OCI-LY7 (cell line): ENCODE measurements at regions of chr3 and their contacts with region 1.

Region 1: DNA sequence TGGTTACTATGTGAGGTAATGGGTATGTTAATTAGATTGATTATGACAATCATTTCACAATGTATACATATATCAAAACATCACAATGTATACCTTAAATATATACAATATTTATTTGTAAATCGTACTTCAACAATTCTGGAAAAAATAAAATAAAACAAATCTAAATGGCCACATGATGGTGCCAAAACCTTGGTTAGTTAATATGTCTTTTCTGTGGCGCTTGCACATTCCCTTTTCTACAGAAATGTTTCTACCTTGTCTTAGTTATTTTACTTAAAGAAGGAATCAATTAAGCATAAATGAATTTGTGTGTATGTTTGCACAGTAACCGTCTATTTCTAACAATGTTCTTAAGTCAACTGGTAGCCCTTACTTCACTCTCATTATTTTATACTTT is 53.4 kb downstream of the OXSM start:
- DNase-seq: peak; percentile 25
- H3K4me3 ChIP-seq: no peak overlapping the region
- H3K27ac ChIP-seq: no peak overlapping the region
- H3K4me1 ChIP-seq: no peaks in the 10 kb centered on the region
- CTCF ChIP-seq: peak; percentile 73

Region 2: GRCh38 chr3:25433868-25434267 is 409.5 kb before region 1 on chr3:
- CTCF ChIA-PET with region 1: no interaction called
- POLR2A ChIA-PET with region 1: no interaction called
- intact Hi-C with region 1: no loop called
- DNase-seq: no peak
- H3K4me3 ChIP-seq: no peak overlapping the region
- H3K27ac ChIP-seq: no peak overlapping the region
- H3K4me1 ChIP-seq: no peaks in the 10 kb centered on the region
- CTCF ChIP-seq: no peak

Region 3: GRCh38 chr3:25812644-25813043 is 30.7 kb before region 1 on chr3:
- CTCF ChIA-PET with region 1: no interaction called
- POLR2A ChIA-PET with region 1: no interaction called
- intact Hi-C with region 1: no loop called
- DNase-seq: no peak
- H3K4me3 ChIP-seq: no peak overlapping the region
- H3K27ac ChIP-seq: no peak overlapping the region
- H3K4me1 ChIP-seq: no peaks in the 10 kb centered on the region
- CTCF ChIP-seq: no peak

Region 4: DNA sequence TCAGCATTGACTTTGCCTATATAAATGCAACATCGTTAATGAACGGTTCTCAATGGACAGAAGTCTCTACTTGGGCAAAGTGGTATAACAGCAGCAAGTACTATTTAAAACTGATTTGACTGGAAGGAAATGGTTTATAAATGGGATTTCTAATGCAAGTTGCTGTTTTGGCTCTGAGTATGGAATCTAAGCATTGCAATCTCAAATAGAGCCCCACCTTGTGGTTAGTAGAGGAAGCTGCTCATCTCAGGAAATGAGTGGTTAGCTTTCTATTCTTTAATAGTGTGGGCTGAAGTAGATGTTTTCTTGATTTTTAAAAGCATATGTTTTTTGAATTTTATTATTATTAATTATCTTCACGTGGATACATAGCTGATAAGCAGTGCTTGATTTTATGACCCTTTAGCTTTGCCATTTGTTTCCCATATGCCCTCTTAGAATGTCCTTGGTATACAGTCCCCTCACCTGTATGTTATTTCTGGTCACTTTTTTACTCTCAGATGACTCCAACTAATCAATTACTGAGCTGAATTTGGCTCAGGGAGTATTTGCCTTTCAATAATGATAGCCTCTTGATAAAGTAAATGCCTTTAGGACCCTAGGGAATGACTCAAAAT is 13.7 kb after region 1 on chr3:
- CTCF ChIA-PET with region 1: interaction called, 4 read pairs
- POLR2A ChIA-PET with region 1: interaction called, 10 read pairs
- intact Hi-C with region 1: no loop called
- DNase-seq: peak; percentile 75
- H3K4me3 ChIP-seq: no peak overlapping the region
- H3K27ac ChIP-seq: no peak overlapping the region
- H3K4me1 ChIP-seq: no peaks in the 10 kb centered on the region
- CTCF ChIP-seq: peak; percentile 97

Region 5: DNA sequence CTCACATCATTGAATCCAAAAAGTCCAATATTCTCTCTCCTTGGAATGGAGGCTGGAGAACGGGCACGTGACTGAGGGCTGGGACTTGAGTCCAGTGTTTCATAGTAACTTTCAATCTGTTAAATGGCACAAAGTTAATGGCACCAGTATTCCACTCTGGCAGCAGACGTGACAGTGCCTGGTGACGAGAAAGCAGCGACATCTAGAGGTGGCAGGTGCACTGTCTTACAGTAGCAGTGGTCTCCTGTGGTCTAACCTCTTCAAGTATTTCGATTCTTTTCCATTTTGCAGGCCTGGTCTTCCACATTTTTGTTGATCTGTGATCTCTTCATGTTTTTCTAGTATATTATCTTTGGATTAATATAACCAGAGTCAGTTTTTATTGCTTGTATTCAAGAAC is 53.7 kb after region 1 on chr3:
- CTCF ChIA-PET with region 1: no interaction called
- POLR2A ChIA-PET with region 1: no interaction called
- intact Hi-C with region 1: loop called (anchors 5 kb)
- DNase-seq: peak; percentile 71
- H3K4me3 ChIP-seq: no peak overlapping the region
- H3K27ac ChIP-seq: no peak overlapping the region
- H3K4me1 ChIP-seq: no peaks in the 10 kb centered on the region
- CTCF ChIP-seq: peak; percentile 96

Region 6: GRCh38 chr3:26118165-26118564 is 274.8 kb after region 1 on chr3:
- CTCF ChIA-PET with region 1: no interaction called
- POLR2A ChIA-PET with region 1: no interaction called
- intact Hi-C with region 1: loop called (anchors 2 kb)
- DNase-seq: peak; percentile 68
- H3K4me3 ChIP-seq: no peak overlapping the region
- H3K27ac ChIP-seq: no peak overlapping the region
- H3K4me1 ChIP-seq: no peaks in the 10 kb centered on the region
- CTCF ChIP-seq: peak; percentile 76